ENCODE measurements at regions of chr6 and their contacts with region 1.

Region 1: DNA sequence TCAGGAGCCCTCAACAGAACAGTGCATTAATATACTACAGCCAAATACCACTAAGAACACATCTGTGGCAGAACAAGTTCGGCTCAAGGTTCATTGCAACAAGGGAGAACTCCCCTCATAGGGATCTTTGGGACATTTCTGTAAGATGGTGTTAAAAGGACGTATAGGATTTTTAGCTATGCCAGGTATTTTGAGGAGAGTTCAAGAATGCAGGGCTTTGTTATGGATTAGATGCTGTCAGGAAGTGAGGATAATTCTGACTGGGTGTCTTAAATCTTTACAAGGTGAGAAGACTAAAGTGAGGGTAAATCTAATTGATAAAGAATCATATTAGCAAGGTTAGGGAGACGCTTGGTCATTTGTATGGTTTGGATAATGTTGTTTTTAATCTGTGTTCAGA is 83.7 kb upstream of the AHI1 start:
- DNase-seq: no peak
- H3K4me3 Mint-ChIP-seq: no peak overlapping the region
- H3K27ac Mint-ChIP-seq: no peak overlapping the region
- H3K4me1 Mint-ChIP-seq: peaks cover 32% of the 10 kb centered on the region
- H3K27me3 Mint-ChIP-seq: peaks cover 4% of the 10 kb centered on the region

Region 2: GRCh38 chr6:135568366-135568765 is 12.8 kb before region 1 on chr6:
- CTCF ChIA-PET with region 1: interaction called, 6 read pairs
- POLR2A ChIA-PET with region 1: interaction called, 12 read pairs
- DNase-seq: peak; percentile 74
- H3K4me3 Mint-ChIP-seq: peak overlapping the region; percentile 9
- H3K27ac Mint-ChIP-seq: peak overlapping the region; percentile 73
- H3K4me1 Mint-ChIP-seq: peaks cover 53% of the 10 kb centered on the region
- H3K27me3 Mint-ChIP-seq: peaks cover 13% of the 10 kb centered on the region

Region 3: GRCh38 chr6:135728589-135728988 is 147.4 kb after region 1 on chr6:
- CTCF ChIA-PET with region 1: no interaction called
- POLR2A ChIA-PET with region 1: no interaction called
- DNase-seq: no peak
- H3K4me3 Mint-ChIP-seq: no peak overlapping the region
- H3K27ac Mint-ChIP-seq: no peak overlapping the region
- H3K4me1 Mint-ChIP-seq: no peaks in the 10 kb centered on the region
- H3K27me3 Mint-ChIP-seq: peaks cover 16% of the 10 kb centered on the region